ENCODE measurements at regions of chr13 and their contacts with region 1.

Region 1: DNA sequence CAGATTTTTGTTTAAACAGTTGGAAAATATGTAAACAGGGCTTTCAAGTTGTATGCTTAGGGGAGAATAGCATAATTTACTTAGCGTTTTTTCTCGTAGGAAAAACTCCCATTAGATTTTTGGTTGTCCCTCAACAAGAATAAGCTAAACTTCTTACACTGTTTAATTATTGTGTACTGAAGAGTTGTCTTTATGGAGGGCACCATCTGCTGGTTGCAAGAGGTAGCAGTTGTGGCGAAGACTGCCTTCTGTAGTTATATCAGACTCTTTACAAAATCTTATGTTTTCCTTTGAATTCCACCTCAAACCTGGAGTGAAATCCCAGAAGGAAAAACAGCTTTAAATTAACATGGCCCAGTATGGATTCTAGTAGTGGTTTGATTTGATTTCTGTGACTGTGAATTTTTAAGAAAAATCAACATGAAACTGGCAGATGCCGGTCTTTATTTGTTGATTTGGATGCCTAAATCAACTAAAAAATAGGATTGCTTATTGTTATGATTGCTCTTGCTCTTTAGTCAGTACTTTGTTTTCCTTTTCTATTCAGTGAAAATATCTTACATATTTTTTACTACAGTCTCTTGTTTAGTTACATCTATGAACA is 53.4 kb downstream of the PDS5B start:
- DNase-seq: peak; percentile 46 to 59 (median 56)
- H3K4me3 ChIP-seq: no peak overlapping the region
- H3K4me3 Mint-ChIP-seq: no peak overlapping the region
- H3K27ac ChIP-seq: no peak overlapping the region
- H3K27ac Mint-ChIP-seq: no peak overlapping the region
- H3K4me1 ChIP-seq: peaks cover 7% of the 10 kb centered on the region
- H3K4me1 Mint-ChIP-seq: peaks cover 19 to 33% (median 28%) of the 10 kb centered on the region in 4 donors
- H3K27me3 ChIP-seq: no peaks in the 10 kb centered on the region
- H3K27me3 Mint-ChIP-seq: no peaks in the 10 kb centered on the region

Region 2: GRCh38 chr13:32581177-32581786 is 58.3 kb before region 1 on chr13:
- CTCF ChIA-PET with region 1: interaction called, 29 read pairs
- POLR2A ChIA-PET with region 1: interaction called, 11 read pairs
- intact Hi-C with region 1: loop called (anchors 1 kb)
- DNase-seq: peak in 3 of 5 donors; percentile 19 to 33 (median 28)
- H3K4me3 ChIP-seq: no peak overlapping the region
- H3K4me3 Mint-ChIP-seq: no peak overlapping the region
- H3K27ac ChIP-seq: no peak overlapping the region
- H3K27ac Mint-ChIP-seq: no peak overlapping the region
- H3K4me1 ChIP-seq: peaks cover 8% of the 10 kb centered on the region
- H3K4me1 Mint-ChIP-seq: peaks cover 1 to 10% (median 7%) of the 10 kb centered on the region in 4 donors
- H3K27me3 ChIP-seq: no peaks in the 10 kb centered on the region
- H3K27me3 Mint-ChIP-seq: no peaks in the 10 kb centered on the region

Region 3: DNA sequence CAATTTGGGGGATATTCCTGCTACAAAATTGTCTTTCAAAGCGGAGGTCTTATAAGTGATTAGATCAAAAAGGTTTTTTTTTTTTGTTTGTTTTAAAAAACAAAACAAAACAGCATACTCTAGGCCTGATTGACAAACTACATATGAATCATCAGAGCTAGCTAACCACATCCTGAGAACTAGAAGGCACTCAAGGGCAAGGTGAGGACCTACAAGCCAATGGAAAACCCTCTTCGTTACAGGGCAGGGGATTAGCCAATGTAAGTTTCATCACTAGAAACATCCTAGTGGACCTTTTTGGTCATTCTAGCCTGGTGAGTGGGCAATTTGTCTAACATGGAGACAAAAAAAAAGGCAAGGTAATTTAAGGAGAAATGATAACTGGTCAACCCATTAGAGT is 1606.9 kb after region 1 on chr13:
- CTCF ChIA-PET with region 1: no interaction called
- POLR2A ChIA-PET with region 1: no interaction called
- intact Hi-C with region 1: no loop called
- DNase-seq: no peak
- H3K4me3 ChIP-seq: no peak overlapping the region
- H3K4me3 Mint-ChIP-seq: no peak overlapping the region
- H3K27ac ChIP-seq: no peak overlapping the region
- H3K27ac Mint-ChIP-seq: no peak overlapping the region
- H3K4me1 ChIP-seq: no peaks in the 10 kb centered on the region
- H3K4me1 Mint-ChIP-seq: no peaks in the 10 kb centered on the region
- H3K27me3 ChIP-seq: no peaks in the 10 kb centered on the region
- H3K27me3 Mint-ChIP-seq: no peaks in the 10 kb centered on the region

Measured in CD4-positive, alpha-beta memory T cell (primary cell).